CD14-positive monocyte (primary cell): ENCODE measurements at regions of chr20 and their contacts with region 1.

Region 1: GRCh38 chr20:41617931-41618806 is at the start of gene CHD6:
- DNase-seq: peak; percentile 97 to 98 (median 97)
- H3K4me3 ChIP-seq: peak within 1 kb of the TSS; percentile 66 to 81 (median 74)
- H3K4me3 Mint-ChIP-seq: peak within 1 kb of the TSS; percentile 86 to 94
- H3K27ac ChIP-seq: peak within 1 kb of the TSS; percentile 53 to 80
- H3K27ac Mint-ChIP-seq: peak within 1 kb of the TSS; percentile 68 to 90 (median 82)
- H3K4me1 ChIP-seq: peaks cover 32 to 35% of the 10 kb centered on the region in 2 donors
- H3K4me1 Mint-ChIP-seq: peaks cover 34% of the 10 kb centered on the region
- H3K27me3 ChIP-seq: no peaks in the 10 kb centered on the region
- H3K27me3 Mint-ChIP-seq: peaks cover 7 to 14% (median 10%) of the 10 kb centered on the region in 3 donors
- CTCF ChIP-seq: no peak
- polyA plus RNA-seq, gene CHD6: 12.9 to 19.6 (median 13.0) TPM

Region 2: GRCh38 chr20:41631826-41632225 is 13.7 kb after region 1 on chr20:
- intact Hi-C with region 1: loop called in 1 of 2 experiments (anchors 2 kb)
- DNase-seq: peak in 2 of 3 donors; percentile 51 to 74
- H3K4me3 ChIP-seq: no peak overlapping the region
- H3K4me3 Mint-ChIP-seq: no peak overlapping the region
- H3K27ac ChIP-seq: peak overlapping the region in 1 of 2 donors; percentile 25
- H3K27ac Mint-ChIP-seq: peak overlapping the region; percentile 72 to 97 (median 84)
- H3K4me1 ChIP-seq: peaks cover 4 to 11% of the 10 kb centered on the region in 2 donors
- H3K4me1 Mint-ChIP-seq: peaks cover 15% of the 10 kb centered on the region
- H3K27me3 ChIP-seq: peaks cover 4 to 6% of the 10 kb centered on the region in 2 donors
- H3K27me3 Mint-ChIP-seq: peaks cover 0 to 4% (median 0%) of the 10 kb centered on the region in 3 donors
- CTCF ChIP-seq: no peak

Region 3: DNA sequence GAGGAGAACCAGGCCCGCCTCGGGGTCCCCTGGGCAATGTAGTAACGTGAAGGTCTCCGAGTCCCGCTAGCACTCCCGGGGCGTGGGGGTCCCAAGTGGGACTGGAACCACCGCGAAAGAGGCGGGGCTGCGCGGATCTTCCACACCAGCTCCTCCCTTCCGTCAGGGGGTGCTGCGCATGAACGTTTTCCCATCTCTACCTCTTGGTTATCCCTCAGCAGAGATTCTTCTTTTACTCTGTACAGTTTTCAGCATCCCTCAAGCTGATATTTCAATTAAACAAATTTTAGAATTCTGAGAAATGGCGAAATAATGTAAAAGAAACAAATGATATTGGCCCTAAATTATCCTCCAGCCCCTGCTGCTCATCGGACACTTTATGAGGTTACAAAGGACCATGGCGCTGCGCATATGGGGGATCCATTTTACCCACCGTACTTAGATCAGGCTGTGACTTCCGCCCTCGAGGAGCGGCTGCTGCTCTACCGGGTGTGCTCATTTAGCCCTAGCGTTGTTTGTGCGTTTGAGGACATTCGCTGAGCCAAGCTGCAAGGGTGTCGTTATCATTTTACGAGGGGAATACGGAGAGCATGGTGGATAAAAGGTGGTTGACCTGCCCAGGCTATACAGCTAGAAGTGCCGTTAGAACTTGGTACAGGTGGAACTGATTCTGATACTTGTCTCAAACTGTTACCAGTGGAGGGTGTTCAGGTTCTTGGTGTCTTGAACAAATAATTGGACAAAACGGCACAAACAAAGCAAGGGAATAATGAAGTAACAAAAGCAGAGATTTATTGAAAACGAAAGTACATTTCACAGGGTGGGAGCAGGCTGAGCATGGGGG is 75.2 kb after region 1 on chr20:
- intact Hi-C with region 1: loop called in 1 of 2 experiments (anchors 10 kb)
- DNase-seq: peak; percentile 69 to 79 (median 79)
- H3K4me3 ChIP-seq: peak overlapping the region; percentile 60 to 96 (median 82)
- H3K4me3 Mint-ChIP-seq: peak overlapping the region; percentile 86 to 92
- H3K27ac ChIP-seq: peak overlapping the region; percentile 68 to 84
- H3K27ac Mint-ChIP-seq: peak overlapping the region; percentile 86 to 96 (median 88)
- H3K4me1 ChIP-seq: peaks cover 6 to 15% of the 10 kb centered on the region in 2 donors
- H3K4me1 Mint-ChIP-seq: peaks cover 18% of the 10 kb centered on the region
- H3K27me3 ChIP-seq: no peaks in the 10 kb centered on the region
- H3K27me3 Mint-ChIP-seq: peaks cover 5 to 7% (median 7%) of the 10 kb centered on the region in 3 donors
- CTCF ChIP-seq: no peak